ENCODE measurements at regions of chr6 and their contacts with region 1.

Region 1: DNA sequence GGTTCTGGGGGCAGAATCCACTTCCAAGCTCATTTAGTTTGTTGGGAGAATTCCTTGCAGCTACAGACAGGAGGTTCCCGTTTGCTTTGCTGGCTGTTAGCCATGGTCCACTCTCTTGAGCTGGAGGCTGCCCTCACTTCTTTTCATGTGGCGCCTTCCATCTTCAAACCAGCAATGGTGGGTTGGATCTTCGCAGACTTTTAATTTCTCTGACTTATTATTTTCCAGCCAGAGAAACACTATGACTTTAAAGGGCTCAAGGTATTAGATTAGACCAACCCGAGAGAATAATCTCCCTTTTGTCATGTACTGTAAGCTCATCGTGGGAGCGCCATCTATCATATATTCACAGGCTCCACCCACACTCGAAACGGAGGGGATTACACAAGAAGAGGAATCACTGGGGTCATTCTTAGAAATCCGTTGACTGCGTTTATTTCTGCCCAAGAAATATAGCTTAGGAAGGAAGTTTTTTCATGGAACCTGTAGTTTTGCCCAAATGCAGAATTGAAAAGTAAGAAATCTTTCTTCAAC is 38.9 kb downstream of the SAMD5 start:
- DNase-seq: peak; percentile 74

Region 2: DNA sequence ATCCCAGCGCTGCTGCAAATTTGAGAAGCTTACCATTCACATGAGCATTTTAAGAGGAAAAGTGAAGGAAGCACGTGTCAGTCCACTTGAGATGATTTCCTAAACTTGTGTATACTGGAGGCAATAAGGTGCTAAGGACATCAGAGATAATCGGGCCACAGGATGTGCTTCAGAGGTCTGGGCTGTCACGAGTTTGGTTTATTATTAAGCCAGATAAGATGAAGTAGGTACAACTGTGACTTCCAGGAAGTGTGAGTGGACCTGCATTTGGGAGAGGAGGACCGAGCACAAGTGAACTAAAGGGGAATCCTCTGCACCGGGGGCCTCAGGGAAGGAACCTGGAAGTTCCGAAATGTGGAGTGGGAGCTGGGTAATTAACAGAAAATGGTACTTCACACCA is 37.5 kb before region 1 on chr6:
- in situ Hi-C with region 1: loop called (anchors 5 kb)
- DNase-seq: peak; percentile 79

Region 3: GRCh38 chr6:147651249-147652063 is 104.0 kb after region 1 on chr6:
- in situ Hi-C with region 1: no loop called
- DNase-seq: peak; percentile 83

Measured in Caki2 (cell line).